ENCODE measurements at regions of chr12 and their contacts with region 1.

Region 1: GRCh38 chr12:58459191-58459590 is 461.1 kb downstream of the LRIG3 start:
- DNase-seq: no peak
- ATAC-seq: no peak
- H3K4me3 ChIP-seq: no peak overlapping the region
- H3K27ac ChIP-seq: no peak overlapping the region
- H3K4me1 ChIP-seq: no peaks in the 10 kb centered on the region
- H3K27me3 ChIP-seq: no peaks in the 10 kb centered on the region
- CTCF ChIP-seq: no peak

Region 2: DNA sequence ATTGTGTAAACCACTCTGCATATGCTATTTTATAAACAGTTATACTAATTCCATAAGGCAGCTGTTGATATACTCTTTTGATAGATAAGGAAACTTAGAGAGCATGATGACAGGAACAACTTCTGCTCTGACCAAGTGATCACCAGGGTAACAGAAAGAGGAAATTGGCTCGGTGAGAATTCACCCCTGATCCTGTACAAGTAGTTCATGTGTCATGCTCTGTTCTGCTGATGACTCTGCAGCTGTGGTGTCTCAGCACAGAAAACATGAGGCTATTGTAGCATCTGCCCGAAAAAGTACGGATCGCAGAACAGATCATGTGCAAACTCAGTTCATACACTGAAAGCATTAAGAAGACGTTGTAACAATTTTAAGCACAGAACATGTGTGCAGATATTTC is 116.1 kb after region 1 on chr12:
- CTCF ChIA-PET with region 1: no interaction called
- POLR2A ChIA-PET with region 1: interaction called, 10 read pairs
- in situ Hi-C with region 1: no loop called
- intact Hi-C with region 1: no loop called
- DNase-seq: no peak
- ATAC-seq: no peak
- H3K4me3 ChIP-seq: no peak overlapping the region
- H3K27ac ChIP-seq: no peak overlapping the region
- H3K4me1 ChIP-seq: no peaks in the 10 kb centered on the region
- H3K27me3 ChIP-seq: no peaks in the 10 kb centered on the region
- CTCF ChIP-seq: no peak